Activated CD4-positive, alpha-beta T cell treated with anti-CD3 and anti-CD28 coated beads for 36 hours (primary cell): ENCODE measurements at regions of chr11 and their contacts with region 1.

Region 1: GRCh38 chr11:13772223-13773046 is 104.0 kb downstream of the FAR1 start:
- DNase-seq: no peak
- ATAC-seq: peak; percentile 74
- H3K4me3 Mint-ChIP-seq: no peak overlapping the region
- H3K27ac Mint-ChIP-seq: no peak overlapping the region
- H3K4me1 Mint-ChIP-seq: no peaks in the 10 kb centered on the region
- H3K27me3 Mint-ChIP-seq: peaks cover 3% of the 10 kb centered on the region

Region 2: DNA sequence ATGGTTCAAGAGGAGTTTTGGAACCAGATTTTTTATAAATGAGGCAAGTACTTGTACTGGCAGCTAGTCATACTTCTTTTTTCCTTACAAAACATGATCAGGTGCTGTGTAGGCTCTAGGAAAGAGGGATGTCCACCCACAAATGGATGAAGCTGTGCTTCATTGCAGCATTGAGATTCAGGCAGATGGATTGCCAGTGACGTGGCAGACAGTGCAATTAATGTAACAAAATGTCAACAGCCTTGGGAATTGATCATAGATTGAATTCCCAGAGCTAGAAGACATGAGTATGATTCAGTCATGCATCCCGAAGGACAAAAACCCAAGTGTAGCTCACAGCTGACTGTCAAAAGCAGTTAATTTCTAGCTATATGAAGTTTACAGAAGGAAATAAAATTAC is 862.6 kb before region 1 on chr11:
- CTCF ChIA-PET with region 1: no interaction called
- POLR2A ChIA-PET with region 1: no interaction called
- intact Hi-C with region 1: no loop called
- DNase-seq: no peak
- ATAC-seq: no peak
- H3K4me3 Mint-ChIP-seq: no peak overlapping the region
- H3K27ac Mint-ChIP-seq: no peak overlapping the region
- H3K4me1 Mint-ChIP-seq: no peaks in the 10 kb centered on the region
- H3K27me3 Mint-ChIP-seq: peaks cover 12% of the 10 kb centered on the region

Region 3: DNA sequence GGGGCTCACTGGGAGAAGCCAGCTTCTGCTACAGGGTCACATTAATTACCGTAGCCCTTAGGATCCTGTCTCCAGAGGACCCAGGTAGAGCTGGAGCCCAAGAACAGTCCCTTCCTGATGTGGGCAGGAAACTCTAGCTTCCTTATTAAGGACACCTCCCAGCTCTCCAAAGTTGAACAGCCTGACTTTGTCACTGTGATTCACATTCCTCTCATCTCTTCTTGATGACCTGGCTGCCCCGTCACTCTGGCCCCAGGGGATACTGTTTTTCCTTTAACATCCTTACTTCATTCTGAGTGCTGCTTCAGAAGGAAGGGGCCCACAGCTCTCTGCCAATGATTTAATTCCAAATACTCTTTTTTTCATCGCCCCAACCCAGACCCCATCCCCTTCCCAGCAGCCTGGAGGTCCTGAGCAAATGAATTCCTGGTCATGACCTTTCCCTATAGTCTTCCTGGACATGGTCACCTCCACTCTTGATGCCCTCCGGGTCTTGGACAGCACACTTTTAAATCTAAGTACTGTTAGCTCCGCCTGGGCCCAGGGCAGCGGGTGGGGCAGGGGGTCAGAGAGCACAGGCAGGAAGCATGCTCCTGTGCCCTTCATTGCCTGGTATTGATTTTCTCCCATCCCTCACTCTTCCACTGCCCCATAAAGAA is 167.6 kb after region 1 on chr11:
- CTCF ChIA-PET with region 1: interaction called, 10 read pairs
- POLR2A ChIA-PET with region 1: no interaction called
- intact Hi-C with region 1: no loop called
- DNase-seq: no peak
- ATAC-seq: no peak
- H3K4me3 Mint-ChIP-seq: no peak overlapping the region
- H3K27ac Mint-ChIP-seq: no peak overlapping the region
- H3K4me1 Mint-ChIP-seq: peaks cover 48% of the 10 kb centered on the region
- H3K27me3 Mint-ChIP-seq: no peaks in the 10 kb centered on the region

Region 4: DNA sequence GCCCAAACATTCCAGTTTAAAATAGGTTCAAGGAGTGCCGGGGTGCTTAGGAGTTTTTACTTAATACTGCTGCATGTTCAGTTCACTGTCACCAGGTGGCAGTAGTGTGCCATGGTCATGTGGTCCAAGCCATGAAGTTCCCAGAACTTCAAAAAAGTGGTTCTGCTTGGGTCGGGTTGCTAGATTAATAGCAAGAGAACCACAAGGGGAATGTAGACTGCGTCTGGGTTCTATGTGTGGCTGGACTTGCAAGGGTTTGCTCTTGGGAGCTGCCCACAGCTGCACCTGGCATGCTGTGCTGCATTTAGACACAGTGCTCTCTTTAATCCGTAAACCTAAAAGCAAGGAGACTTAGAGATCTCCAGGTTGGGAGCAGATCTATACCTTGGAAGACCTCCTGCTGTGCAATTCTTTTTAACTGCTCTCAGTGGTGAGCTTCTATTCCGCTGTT is 183.6 kb after region 1 on chr11:
- CTCF ChIA-PET with region 1: interaction called, 10 read pairs
- POLR2A ChIA-PET with region 1: no interaction called
- intact Hi-C with region 1: loop called (anchors 1 kb)
- DNase-seq: peak; percentile 71
- ATAC-seq: peak; percentile 58
- H3K4me3 Mint-ChIP-seq: no peak overlapping the region
- H3K27ac Mint-ChIP-seq: no peak overlapping the region
- H3K4me1 Mint-ChIP-seq: no peaks in the 10 kb centered on the region
- H3K27me3 Mint-ChIP-seq: peaks cover 13% of the 10 kb centered on the region